CD8-positive, alpha-beta memory T cell (primary cell): ENCODE measurements at regions of chr3 and their contacts with region 1.

Region 1: DNA sequence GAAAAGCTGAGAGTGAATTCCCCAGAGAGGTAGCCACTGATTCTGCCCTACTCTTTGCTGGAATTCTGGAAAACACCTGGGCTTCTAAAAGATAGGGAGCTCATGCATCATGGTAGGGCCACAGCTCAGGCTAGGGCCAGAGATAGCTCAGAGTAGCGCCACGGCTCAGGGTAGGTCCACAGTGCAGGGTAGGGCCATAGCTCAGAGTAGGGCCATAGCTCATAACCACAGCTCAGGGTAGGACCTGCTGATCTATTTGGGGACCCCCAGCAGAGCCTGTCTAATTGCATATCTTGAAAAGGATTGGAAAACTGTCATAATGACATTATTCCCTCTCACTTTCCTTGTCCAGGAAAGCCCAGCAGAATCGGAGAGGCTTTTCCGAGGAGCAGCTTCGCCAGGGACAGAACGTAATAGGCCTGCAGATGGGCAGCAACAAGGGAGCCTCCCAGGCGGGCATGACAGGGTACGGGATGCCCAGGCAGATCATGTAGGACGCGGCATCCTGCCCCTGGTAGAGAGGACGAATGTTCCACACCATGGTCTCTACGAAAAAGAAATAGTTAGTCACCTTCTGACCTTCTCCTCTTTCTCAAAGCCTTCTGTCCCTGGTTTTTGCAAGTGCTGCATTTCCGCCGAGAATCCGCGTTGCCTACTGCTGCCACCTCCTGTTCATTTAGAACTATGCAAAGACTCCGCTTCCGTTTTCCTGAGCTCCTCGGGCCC is 14.5 kb downstream of the TAGLN3 start:
- DNase-seq: peak; percentile 15 to 57 (median 41)
- H3K4me3 ChIP-seq: no peak overlapping the region
- H3K4me3 Mint-ChIP-seq: peak overlapping the region in 4 of 7 donors; percentile 21 to 67 (median 36)
- H3K27ac ChIP-seq: no peak overlapping the region
- H3K27ac Mint-ChIP-seq: peak overlapping the region in 2 of 8 donors; percentile 20 to 76
- H3K4me1 ChIP-seq: peaks cover 5% of the 10 kb centered on the region
- H3K4me1 Mint-ChIP-seq: peaks cover 5 to 19% (median 11%) of the 10 kb centered on the region in 3 donors
- H3K27me3 ChIP-seq: no peaks in the 10 kb centered on the region
- H3K27me3 Mint-ChIP-seq: peaks cover 0 to 1% of the 10 kb centered on the region in 2 donors

Region 2: DNA sequence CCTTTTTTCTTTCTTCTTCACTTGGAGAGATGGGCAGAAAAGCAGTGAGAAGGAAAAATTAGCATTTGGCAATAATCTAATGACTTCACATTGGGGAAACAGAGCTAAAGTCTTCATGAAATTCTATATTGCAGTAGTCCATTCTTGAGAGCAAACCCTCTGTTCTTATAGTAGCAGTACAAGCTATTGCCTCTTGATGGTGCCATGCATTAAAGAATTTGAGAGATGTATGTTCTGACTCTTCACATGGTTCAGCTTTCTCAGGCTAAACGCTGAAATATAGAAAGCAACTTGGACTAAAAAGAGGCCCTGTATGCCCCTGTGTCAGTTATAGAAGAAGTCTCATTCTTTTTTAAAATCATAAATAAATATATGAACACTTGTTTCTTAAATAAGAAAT is 118.1 kb before region 1 on chr3:
- CTCF ChIA-PET with region 1: no interaction called
- POLR2A ChIA-PET with region 1: no interaction called
- DNase-seq: no peak
- H3K4me3 ChIP-seq: no peak overlapping the region
- H3K4me3 Mint-ChIP-seq: no peak overlapping the region
- H3K27ac ChIP-seq: no peak overlapping the region
- H3K27ac Mint-ChIP-seq: no peak overlapping the region
- H3K4me1 ChIP-seq: no peaks in the 10 kb centered on the region
- H3K4me1 Mint-ChIP-seq: peaks cover 0 to 4% (median 2%) of the 10 kb centered on the region in 3 donors
- H3K27me3 ChIP-seq: no peaks in the 10 kb centered on the region
- H3K27me3 Mint-ChIP-seq: no peaks in the 10 kb centered on the region

Region 3: GRCh38 chr3:111989061-111989678 is 24.1 kb before region 1 on chr3:
- CTCF ChIA-PET with region 1: interaction called, 47 read pairs
- POLR2A ChIA-PET with region 1: no interaction called
- DNase-seq: peak in 1 of 5 donors; percentile 14
- H3K4me3 ChIP-seq: no peak overlapping the region
- H3K4me3 Mint-ChIP-seq: no peak overlapping the region
- H3K27ac ChIP-seq: no peak overlapping the region
- H3K27ac Mint-ChIP-seq: peak overlapping the region in 1 of 8 donors; percentile 44
- H3K4me1 ChIP-seq: peaks cover 2% of the 10 kb centered on the region
- H3K4me1 Mint-ChIP-seq: peaks cover 27 to 42% (median 42%) of the 10 kb centered on the region in 3 donors
- H3K27me3 ChIP-seq: no peaks in the 10 kb centered on the region
- H3K27me3 Mint-ChIP-seq: no peaks in the 10 kb centered on the region

Region 4: DNA sequence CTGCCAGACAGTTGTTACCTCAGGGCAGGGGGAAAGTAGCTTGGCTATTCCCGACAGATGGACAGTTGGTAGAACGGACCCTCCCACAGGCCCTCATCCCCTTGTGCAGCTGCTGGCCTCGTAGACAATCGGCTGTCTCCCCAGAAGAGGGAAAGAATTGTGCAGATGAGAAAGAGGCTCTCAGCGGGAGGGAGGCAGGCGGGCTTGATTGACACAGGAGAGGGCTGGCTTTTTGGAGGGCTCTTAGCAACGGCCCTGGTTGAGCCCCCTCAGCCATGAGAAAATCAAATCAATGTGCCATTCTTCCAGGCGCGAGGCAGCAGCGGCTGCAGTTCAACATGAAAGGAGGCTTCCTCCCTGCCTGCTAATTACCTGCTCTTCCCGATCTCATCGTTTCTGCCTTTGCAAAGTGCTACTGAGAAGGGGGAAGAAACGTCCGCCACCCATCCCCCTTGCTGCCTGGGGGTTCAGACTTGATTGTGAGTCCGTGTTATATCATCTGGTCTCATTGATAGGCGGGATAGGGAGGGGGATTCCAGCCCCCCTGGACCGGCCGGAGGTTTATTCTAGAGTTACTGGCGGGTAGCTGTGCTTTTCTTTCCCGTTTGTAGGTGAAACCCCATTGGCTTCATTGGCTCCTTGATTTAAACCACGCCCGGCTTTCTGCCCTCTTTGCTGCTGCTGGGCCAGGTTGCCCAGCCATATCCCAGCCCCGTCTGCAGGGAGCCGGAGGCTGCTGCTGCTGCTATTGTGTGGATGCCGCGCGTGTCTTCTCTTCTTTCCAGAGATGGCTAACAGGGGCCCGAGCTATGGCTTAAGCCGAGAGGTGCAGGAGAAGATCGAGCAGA is 14.4 kb before region 1 on chr3 and contains the start of gene TAGLN3:
- CTCF ChIA-PET with region 1: interaction called, 50 read pairs
- POLR2A ChIA-PET with region 1: no interaction called
- DNase-seq: no peak
- H3K4me3 ChIP-seq: peak within 1 kb of the TSS; percentile 12
- H3K4me3 Mint-ChIP-seq: peak within 1 kb of the TSS in 6 of 7 donors; percentile 25 to 67 (median 58)
- H3K27ac ChIP-seq: no peak within 1 kb of the TSS
- H3K27ac Mint-ChIP-seq: peak within 1 kb of the TSS in 1 of 8 donors; percentile 4
- H3K4me1 ChIP-seq: peaks cover 15% of the 10 kb centered on the region
- H3K4me1 Mint-ChIP-seq: peaks cover 19 to 25% (median 20%) of the 10 kb centered on the region in 3 donors
- H3K27me3 ChIP-seq: no peaks in the 10 kb centered on the region
- H3K27me3 Mint-ChIP-seq: peaks cover 0 to 5% of the 10 kb centered on the region in 2 donors
- total RNA-seq, gene TAGLN3: not detected